ENCODE measurements at regions of chr2 and their contacts with region 1.

Region 1: DNA sequence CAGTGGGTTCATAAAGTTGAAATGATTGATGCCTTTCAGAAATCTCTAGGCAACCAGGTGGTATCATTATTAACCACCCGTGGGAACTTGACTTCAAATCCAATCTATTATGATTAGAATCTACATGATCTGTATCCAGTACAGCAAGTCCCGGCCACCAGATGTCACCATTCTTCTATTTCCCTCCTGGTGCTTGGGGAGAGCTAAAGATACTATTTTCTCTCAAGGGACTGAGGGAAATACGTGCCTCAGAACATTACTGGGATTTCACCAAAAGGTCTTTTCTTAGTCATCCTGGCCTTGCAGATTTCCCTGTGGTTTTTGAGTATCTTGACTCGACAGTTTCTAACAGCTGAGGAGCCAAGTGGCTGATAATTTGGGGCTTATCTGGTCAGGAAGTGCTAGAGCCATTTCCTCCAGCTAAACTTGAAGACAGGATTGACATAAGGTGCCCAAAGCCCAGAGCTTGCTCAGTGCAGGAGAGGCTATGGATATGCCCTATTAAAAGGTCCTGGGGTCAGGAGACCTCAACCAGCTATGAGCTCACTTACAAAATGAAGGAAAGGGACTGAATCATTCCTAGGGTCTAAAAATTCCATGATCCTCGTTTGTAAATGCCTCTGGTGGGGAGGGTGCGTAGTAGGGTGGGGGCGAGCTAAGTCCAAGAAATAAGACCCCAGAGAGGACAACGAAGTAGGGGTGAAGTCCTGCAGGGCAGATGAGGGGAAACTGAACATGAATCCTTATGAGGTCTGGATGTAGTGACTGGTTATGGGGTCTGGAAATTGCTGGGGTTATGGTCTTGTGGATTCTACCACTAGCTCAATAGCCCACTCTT is 135.4 kb upstream of the MGAT5 start:
- DNase-seq: peak; percentile 69
- H3K4me3 Mint-ChIP-seq: peak overlapping the region; percentile 99
- H3K27ac Mint-ChIP-seq: peak overlapping the region; percentile 16
- H3K4me1 Mint-ChIP-seq: peaks cover 28% of the 10 kb centered on the region
- H3K27me3 Mint-ChIP-seq: peaks cover 29% of the 10 kb centered on the region

Region 2: GRCh38 chr2:134137182-134137611 is 18.7 kb after region 1 on chr2:
- intact Hi-C with region 1: no loop called
- DNase-seq: no peak
- H3K4me3 Mint-ChIP-seq: no peak overlapping the region
- H3K27ac Mint-ChIP-seq: peak overlapping the region; percentile 54
- H3K4me1 Mint-ChIP-seq: peaks cover 27% of the 10 kb centered on the region
- H3K27me3 Mint-ChIP-seq: peaks cover 2% of the 10 kb centered on the region

Region 3: GRCh38 chr2:134218930-134219658 is 100.6 kb after region 1 on chr2:
- intact Hi-C with region 1: loop called (anchors 1 kb)
- DNase-seq: peak; percentile 11
- H3K4me3 Mint-ChIP-seq: no peak overlapping the region
- H3K27ac Mint-ChIP-seq: peak overlapping the region; percentile 75
- H3K4me1 Mint-ChIP-seq: peaks cover 40% of the 10 kb centered on the region
- H3K27me3 Mint-ChIP-seq: peaks cover 9% of the 10 kb centered on the region

Region 4: GRCh38 chr2:134282629-134283400 is 164.3 kb after region 1 on chr2:
- intact Hi-C with region 1: loop called (anchors 2 kb)
- DNase-seq: peak; percentile 16
- H3K4me3 Mint-ChIP-seq: peak overlapping the region; percentile 20
- H3K27ac Mint-ChIP-seq: peak overlapping the region; percentile 63
- H3K4me1 Mint-ChIP-seq: peaks cover 33% of the 10 kb centered on the region
- H3K27me3 Mint-ChIP-seq: peaks cover 20% of the 10 kb centered on the region

Region 5: DNA sequence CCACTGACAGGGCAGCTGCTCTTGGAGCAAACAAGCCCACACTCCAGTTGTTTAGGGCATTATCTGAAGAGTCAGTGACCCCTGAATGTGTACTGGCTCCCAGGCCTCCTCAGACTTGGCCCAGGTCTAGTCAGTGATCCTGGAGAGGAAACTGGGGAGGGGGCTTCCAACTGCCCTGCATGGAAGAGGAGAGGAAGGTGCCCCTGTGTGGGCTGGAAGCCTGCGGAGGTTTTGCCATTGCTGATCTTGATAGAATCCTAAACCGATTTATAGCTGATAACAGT is 332.8 kb after region 1 on chr2:
- intact Hi-C with region 1: loop called (anchors 1 kb)
- DNase-seq: no peak
- H3K4me3 Mint-ChIP-seq: no peak overlapping the region
- H3K27ac Mint-ChIP-seq: no peak overlapping the region
- H3K4me1 Mint-ChIP-seq: no peaks in the 10 kb centered on the region
- H3K27me3 Mint-ChIP-seq: no peaks in the 10 kb centered on the region

Region 6: GRCh38 chr2:134897932-134898331 is 779.4 kb after region 1 on chr2:
- intact Hi-C with region 1: loop called (anchors 1 kb)
- DNase-seq: no peak
- H3K4me3 Mint-ChIP-seq: no peak overlapping the region
- H3K27ac Mint-ChIP-seq: no peak overlapping the region
- H3K4me1 Mint-ChIP-seq: no peaks in the 10 kb centered on the region
- H3K27me3 Mint-ChIP-seq: peaks cover 15% of the 10 kb centered on the region

Region 7: DNA sequence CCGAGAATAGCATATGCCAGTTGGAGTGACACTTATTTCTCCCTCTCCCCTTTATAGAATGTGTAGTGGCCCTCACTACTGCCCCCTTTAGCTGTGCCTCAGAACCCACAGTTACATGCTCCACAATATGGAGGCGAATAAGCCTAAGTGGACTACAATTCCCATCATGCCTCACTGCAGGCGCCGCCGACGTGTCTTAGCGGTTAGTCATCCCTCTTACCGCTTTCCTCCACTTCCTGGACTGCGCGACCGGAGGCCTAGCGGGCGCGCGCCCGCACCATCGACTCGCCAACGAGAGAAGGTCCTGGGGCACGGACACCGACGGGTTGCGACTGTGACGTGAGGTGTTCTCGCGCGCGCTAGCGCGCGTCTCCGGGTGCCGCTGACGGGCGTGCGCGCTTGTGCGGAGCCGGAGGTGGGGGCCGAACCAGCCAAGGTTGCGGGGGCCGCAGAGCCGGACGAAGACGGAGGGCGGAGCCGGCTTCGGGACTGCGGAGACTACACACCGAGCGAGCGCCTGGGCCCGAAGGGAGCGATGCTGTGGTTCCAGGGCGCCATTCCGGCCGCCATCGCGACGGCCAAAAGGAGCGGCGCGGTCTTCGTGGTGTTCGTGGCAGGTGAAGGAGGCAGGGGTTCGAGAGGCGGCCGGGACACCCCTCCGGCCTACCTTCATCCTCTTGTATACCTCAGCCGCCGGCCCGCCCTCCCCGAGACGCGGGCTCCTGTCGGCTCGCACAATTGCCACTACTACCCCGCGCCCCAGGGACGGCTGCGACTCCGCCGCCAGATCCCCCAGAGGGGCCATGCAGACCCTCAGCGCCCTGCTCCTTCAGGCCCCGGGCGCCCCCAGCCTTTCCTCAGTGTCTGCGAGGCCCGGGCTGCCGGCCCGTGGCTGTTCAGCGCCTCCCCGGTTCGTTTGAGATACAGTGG is 1623.2 kb after region 1 on chr2 and contains the start of gene UBXN4:
- intact Hi-C with region 1: loop called (anchors 5 kb)
- DNase-seq: peak; percentile 89
- H3K4me3 Mint-ChIP-seq: peak within 1 kb of the TSS; percentile 99
- H3K27ac Mint-ChIP-seq: peak within 1 kb of the TSS; percentile 100
- H3K4me1 Mint-ChIP-seq: peaks cover 36% of the 10 kb centered on the region
- H3K27me3 Mint-ChIP-seq: no peaks in the 10 kb centered on the region
- total RNA-seq, gene UBXN4: 115 and 121 TPM in 2 replicates